Activated B cell treated with CpG ODN at 0.5 μM for 24 hours (primary cell): ENCODE measurements at regions of chr3 and their contacts with region 1.

Region 1: DNA sequence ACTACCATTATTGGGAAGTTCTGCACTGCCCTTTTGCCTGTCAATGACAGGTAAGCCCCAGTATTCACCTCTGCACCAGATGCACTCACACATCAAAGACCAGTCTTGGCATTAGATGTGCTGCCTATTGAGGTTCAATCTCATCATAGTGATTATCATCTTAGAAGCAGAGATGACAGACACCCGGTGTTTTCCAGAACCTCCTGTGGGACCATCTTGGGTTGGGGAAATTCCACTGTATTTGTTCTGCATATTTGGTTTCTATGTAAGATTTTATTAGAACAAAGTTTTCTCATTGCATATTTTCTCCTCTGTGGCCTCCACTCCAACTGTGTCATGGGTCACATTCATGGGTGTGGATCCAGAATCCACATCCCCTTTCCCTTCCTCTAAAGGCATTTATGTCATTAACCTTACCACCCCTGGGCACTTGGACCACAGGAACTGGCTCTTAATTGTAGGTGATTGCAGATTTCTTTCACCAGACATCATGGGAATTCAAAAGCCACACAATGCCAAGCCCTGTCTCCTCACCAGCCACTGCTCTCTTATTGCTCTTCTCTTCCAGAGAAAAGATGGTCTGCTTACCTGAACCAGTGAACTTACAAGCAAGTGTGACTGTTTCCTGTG is 31.2 kb downstream of the PLA1A start:
- DNase-seq: peak; percentile 24
- ATAC-seq: peak; percentile 69
- H3K4me3 Mint-ChIP-seq: peak overlapping the region; percentile 73
- H3K27ac Mint-ChIP-seq: peak overlapping the region; percentile 97
- H3K4me1 Mint-ChIP-seq: peaks cover 70% of the 10 kb centered on the region
- H3K27me3 Mint-ChIP-seq: no peaks in the 10 kb centered on the region
- CTCF ChIP-seq: no peak

Region 2: GRCh38 chr3:119579366-119580165 is 49.4 kb before region 1 on chr3 and contains the start of gene ADPRH:
- CTCF ChIA-PET with region 1: no interaction called
- POLR2A ChIA-PET with region 1: interaction called, 13 read pairs
- intact Hi-C with region 1: loop called (anchors 1 kb)
- DNase-seq: peak; percentile 76
- ATAC-seq: peak; percentile 76
- H3K4me3 Mint-ChIP-seq: peak within 1 kb of the TSS; percentile 97
- H3K27ac Mint-ChIP-seq: peak within 1 kb of the TSS; percentile 99
- H3K4me1 Mint-ChIP-seq: peaks cover 37% of the 10 kb centered on the region
- H3K27me3 Mint-ChIP-seq: no peaks in the 10 kb centered on the region
- CTCF ChIP-seq: no peak
- total RNA-seq, gene ADPRH: 41.2 and 43.8 TPM in 2 replicates

Region 3: DNA sequence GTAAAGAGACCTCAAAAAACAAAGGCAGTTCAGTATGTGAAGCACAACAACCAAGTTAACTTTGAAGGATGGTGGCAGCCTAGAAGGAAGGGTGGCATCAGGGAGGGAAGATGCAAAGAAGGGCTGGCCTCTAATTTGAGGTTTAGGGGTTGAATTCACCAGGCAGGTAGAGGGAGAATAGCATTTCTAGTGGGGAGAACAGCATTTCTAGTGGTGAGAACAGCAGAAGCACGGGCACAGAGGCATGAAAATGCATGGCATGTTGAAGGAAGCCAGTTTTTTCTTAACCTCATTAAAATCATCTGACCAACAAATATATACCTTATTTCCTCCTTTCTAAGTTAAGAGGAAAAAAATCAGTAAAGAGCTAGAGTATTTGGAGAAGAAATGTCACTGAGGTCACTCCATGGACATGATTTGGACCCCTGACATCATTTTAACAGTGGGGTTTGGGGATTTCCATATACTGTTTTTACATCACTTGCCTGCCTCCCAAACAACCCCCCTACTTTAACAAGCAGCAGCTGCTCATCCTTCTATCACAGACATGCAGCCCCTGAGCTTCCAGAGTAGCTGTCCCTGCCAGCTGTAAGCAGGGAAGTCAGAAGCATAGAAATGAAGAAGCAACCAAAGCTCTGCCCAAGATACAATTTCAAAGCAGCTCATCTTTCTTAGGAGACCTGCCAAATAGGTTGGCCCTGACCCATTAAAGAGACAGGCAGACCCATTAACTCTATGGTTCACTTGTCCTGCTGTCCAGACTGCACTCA is 33.9 kb after region 1 on chr3:
- CTCF ChIA-PET with region 1: interaction called, 7 read pairs
- POLR2A ChIA-PET with region 1: interaction called, 7 read pairs
- intact Hi-C with region 1: loop called (anchors 1 kb)
- DNase-seq: no peak
- ATAC-seq: no peak
- H3K4me3 Mint-ChIP-seq: no peak overlapping the region
- H3K27ac Mint-ChIP-seq: peak overlapping the region; percentile 67
- H3K4me1 Mint-ChIP-seq: peaks cover 68% of the 10 kb centered on the region
- H3K27me3 Mint-ChIP-seq: no peaks in the 10 kb centered on the region
- CTCF ChIP-seq: no peak

Region 4: GRCh38 chr3:119690043-119690656 is 61.2 kb after region 1 on chr3:
- CTCF ChIA-PET with region 1: no interaction called
- POLR2A ChIA-PET with region 1: no interaction called
- intact Hi-C with region 1: no loop called
- DNase-seq: no peak
- ATAC-seq: no peak
- H3K4me3 Mint-ChIP-seq: no peak overlapping the region
- H3K27ac Mint-ChIP-seq: no peak overlapping the region
- H3K4me1 Mint-ChIP-seq: no peaks in the 10 kb centered on the region
- H3K27me3 Mint-ChIP-seq: no peaks in the 10 kb centered on the region
- CTCF ChIP-seq: no peak

Region 5: GRCh38 chr3:119702530-119703157 is 73.7 kb after region 1 on chr3 and contains the start of gene CFAP91:
- CTCF ChIA-PET with region 1: no interaction called
- POLR2A ChIA-PET with region 1: no interaction called
- intact Hi-C with region 1: loop called (anchors 2 kb)
- DNase-seq: peak; percentile 86
- ATAC-seq: peak; percentile 92
- H3K4me3 Mint-ChIP-seq: peak within 1 kb of the TSS; percentile 86
- H3K27ac Mint-ChIP-seq: peak within 1 kb of the TSS; percentile 72
- H3K4me1 Mint-ChIP-seq: peaks cover 52% of the 10 kb centered on the region
- H3K27me3 Mint-ChIP-seq: no peaks in the 10 kb centered on the region
- CTCF ChIP-seq: no peak
- total RNA-seq, gene CFAP91: 8.5 and 12.9 TPM in 2 replicates